Activated T-helper 2 cell treated with anti-CD3 and anti-CD28 coated beads, Interferon-gamma antibody, Interleukin-2, Interleukin-4, amounts not matched to agents 10 μg/mL and 5 μg/mL and 100 μg/mL, durations not matched to agents 14 hours and 24 hours and 36 hours (primary cell): ENCODE measurements at regions of chr4 and their contacts with region 1.

Region 1: GRCh38 chr4:140523857-140524742 is at the start of gene ELMOD2:
- DNase-seq: peak; percentile 97
- H3K4me3 Mint-ChIP-seq: peak within 1 kb of the TSS; percentile 85
- H3K27ac Mint-ChIP-seq: peak within 1 kb of the TSS; percentile 49
- H3K4me1 Mint-ChIP-seq: peaks cover 11% of the 10 kb centered on the region
- H3K27me3 Mint-ChIP-seq: peaks cover 6% of the 10 kb centered on the region
- total RNA-seq, gene ELMOD2: 15.3 and 16.0 TPM in 2 replicates

Region 2: GRCh38 chr4:139301113-139301820 is 1222.8 kb before region 1 on chr4 and contains the start of gene NAA15:
- intact Hi-C with region 1: loop called (anchors 10 kb)
- DNase-seq: peak; percentile 98
- H3K4me3 Mint-ChIP-seq: peak within 1 kb of the TSS; percentile 98
- H3K27ac Mint-ChIP-seq: peak within 1 kb of the TSS; percentile 99
- H3K4me1 Mint-ChIP-seq: peaks cover 48% of the 10 kb centered on the region
- H3K27me3 Mint-ChIP-seq: no peaks in the 10 kb centered on the region
- total RNA-seq, gene NAA15: 86.7 and 97.4 TPM in 2 replicates

Region 3: GRCh38 chr4:139734875-139735380 is 789.2 kb before region 1 on chr4:
- intact Hi-C with region 1: loop called (anchors 5 kb)
- DNase-seq: peak; percentile 35
- H3K4me3 Mint-ChIP-seq: peak overlapping the region; percentile 49
- H3K27ac Mint-ChIP-seq: no peak overlapping the region
- H3K4me1 Mint-ChIP-seq: peaks cover 11% of the 10 kb centered on the region
- H3K27me3 Mint-ChIP-seq: peaks cover 54% of the 10 kb centered on the region

Region 4: GRCh38 chr4:140556372-140557085 is 32.4 kb after region 1 on chr4:
- intact Hi-C with region 1: loop called (anchors 1 kb)
- DNase-seq: peak; percentile 10
- H3K4me3 Mint-ChIP-seq: no peak overlapping the region
- H3K27ac Mint-ChIP-seq: no peak overlapping the region
- H3K4me1 Mint-ChIP-seq: peaks cover 15% of the 10 kb centered on the region
- H3K27me3 Mint-ChIP-seq: peaks cover 25% of the 10 kb centered on the region